Psoas muscle (tissue), 8 donors: ENCODE measurements at regions of chr6 and their contacts with region 1.

Region 1: DNA sequence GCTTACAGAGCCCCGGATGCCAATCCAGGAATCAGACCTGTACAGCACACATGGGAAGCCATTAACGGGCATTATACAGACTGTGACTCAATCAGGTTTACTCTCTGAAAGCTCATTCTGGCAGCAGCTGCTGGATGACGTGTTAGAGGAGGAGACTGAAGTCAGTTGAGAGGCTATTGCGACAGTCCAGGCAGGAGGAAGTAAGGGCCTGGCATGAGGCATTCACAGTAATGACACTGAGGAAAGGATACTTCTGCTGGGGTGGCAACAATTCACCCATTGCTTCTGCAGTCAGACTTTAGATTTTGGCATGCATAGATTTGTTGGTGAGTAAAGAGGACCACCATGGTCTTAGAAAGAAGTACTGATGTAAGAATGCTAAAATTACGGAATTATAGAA is 151.0 kb upstream of the HEY2 start:
- DNase-seq: peak; percentile 79 to 94
- ATAC-seq: peak; percentile 88 to 95 (median 92)
- H3K4me3 ChIP-seq: peak overlapping the region; percentile 32
- H3K27ac ChIP-seq: peak overlapping the region; percentile 92
- H3K4me1 ChIP-seq: peaks cover 29% of the 10 kb centered on the region
- H3K27me3 ChIP-seq: no peaks in the 10 kb centered on the region
- CTCF ChIP-seq: no peak

Region 2: DNA sequence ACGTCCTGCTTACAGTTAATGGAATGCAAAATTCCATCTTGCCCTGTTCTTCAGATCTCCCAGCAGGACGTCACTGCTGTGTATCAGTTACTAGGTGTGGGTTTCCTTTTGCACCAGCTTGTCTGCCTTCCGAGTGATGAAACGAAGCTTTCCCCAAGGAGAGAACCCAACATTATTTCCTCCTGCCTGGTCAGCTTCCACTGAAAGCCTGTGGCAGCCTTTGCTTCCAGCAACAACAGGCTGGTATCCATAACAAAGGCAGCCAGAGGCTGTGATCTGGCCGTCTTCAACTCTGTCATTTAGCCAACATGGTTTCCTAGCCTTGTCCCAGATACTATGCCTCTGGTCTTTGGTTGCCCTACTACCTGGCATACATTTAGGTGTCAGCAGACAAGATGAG is 72.1 kb after region 1 on chr6:
- intact Hi-C with region 1: loop called in 1 of 2 experiments (anchors 1 kb)
- DNase-seq: peak in 1 of 2 donors; percentile 19
- ATAC-seq: peak; percentile 92 to 94 (median 92)
- H3K4me3 ChIP-seq: no peak overlapping the region
- H3K27ac ChIP-seq: peak overlapping the region; percentile 79
- H3K4me1 ChIP-seq: peaks cover 13% of the 10 kb centered on the region
- H3K27me3 ChIP-seq: no peaks in the 10 kb centered on the region
- CTCF ChIP-seq: no peak